Activated CD8-positive, alpha-beta T cell treated with anti-CD3 and anti-CD28 coated beads for 36 hours (primary cell): ENCODE measurements at regions of chr13 and their contacts with region 1.

Region 1: DNA sequence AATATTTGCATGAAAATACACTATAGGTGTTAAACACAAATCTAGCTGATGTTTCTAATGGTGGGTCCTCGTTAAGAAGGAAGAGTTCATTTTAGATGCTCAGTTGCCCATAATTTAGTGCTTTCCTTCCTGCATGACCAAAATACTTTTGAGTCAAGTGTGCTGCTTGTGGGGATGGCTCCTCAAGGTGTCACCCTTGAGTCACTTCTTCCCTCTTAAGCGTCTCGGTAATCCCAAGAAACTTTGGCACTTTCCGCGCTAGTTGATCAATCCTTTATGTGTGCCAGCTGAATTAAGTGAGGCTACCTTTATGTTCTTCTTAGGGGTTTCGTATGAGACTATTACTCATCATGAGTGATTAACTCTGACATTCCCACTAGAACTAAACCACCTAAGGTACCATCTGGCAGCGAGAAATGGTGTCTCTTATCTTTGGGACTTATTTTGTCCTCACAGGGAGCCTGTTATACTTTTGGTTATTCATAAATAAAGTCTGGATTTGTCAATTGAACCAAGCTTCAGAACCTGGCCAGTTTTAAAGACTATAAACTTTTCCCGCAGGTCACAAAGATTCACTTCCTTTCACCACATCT is 106.8 kb downstream of the NHLRC3 start:
- DNase-seq: peak; percentile 50
- ATAC-seq: peak; percentile 60
- H3K4me3 Mint-ChIP-seq: no peak overlapping the region
- H3K27ac Mint-ChIP-seq: no peak overlapping the region
- H3K4me1 Mint-ChIP-seq: peaks cover 11% of the 10 kb centered on the region
- H3K27me3 Mint-ChIP-seq: peaks cover 33% of the 10 kb centered on the region
- CTCF ChIP-seq: peak; percentile 52

Region 2: GRCh38 chr13:38967446-38967845 is 177.6 kb before region 1 on chr13:
- CTCF ChIA-PET with region 1: no interaction called
- POLR2A ChIA-PET with region 1: no interaction called
- intact Hi-C with region 1: no loop called
- DNase-seq: no peak
- ATAC-seq: no peak
- H3K4me3 Mint-ChIP-seq: no peak overlapping the region
- H3K27ac Mint-ChIP-seq: no peak overlapping the region
- H3K4me1 Mint-ChIP-seq: no peaks in the 10 kb centered on the region
- H3K27me3 Mint-ChIP-seq: peaks cover 10% of the 10 kb centered on the region
- CTCF ChIP-seq: no peak

Region 3: DNA sequence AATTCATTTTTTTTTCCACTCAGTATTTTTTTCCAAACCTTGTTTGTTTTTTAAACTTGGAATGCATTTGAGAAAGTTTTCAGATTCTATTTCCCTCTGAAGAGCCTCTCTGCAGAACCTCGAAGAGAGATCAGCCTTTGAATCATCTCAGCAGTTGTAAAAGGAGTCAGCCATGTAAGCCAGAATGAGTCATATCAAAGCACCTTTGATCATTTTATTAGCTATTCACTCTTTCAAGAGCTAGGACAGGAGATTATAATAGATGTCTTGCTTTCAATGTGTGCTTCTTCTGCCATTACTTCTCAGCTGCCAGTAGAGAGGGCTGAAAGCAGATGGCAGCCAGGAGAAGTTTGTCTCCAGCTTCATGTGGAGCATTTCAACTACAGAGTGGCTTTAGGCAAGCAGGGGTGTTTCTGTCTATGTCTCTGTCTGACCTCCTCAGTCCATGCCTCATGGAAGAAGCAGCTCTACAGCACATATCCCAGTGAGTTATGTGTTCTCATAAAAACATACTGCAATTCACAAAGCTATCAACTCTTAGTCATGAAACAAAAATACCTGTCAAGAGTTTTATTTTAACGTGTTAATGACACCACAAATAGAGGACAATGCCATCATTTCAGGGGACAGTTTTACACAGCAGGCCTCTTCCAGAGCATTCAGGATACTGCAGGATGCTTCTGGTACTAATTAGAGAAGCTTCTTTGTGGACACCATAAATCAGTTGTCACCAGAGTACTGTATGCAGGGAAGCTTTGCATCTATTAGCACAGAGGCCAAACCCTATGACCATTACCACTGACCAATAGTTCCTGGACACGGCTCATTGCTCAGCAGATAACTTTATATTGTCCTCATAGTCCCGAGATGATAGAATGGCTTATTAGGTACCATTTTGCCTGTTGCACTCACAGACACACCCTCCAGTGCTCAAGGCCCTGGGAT is 12.5 kb before region 1 on chr13:
- CTCF ChIA-PET with region 1: interaction called, 14 read pairs
- POLR2A ChIA-PET with region 1: no interaction called
- intact Hi-C with region 1: no loop called
- DNase-seq: no peak
- ATAC-seq: peak; percentile 58
- H3K4me3 Mint-ChIP-seq: no peak overlapping the region
- H3K27ac Mint-ChIP-seq: no peak overlapping the region
- H3K4me1 Mint-ChIP-seq: peaks cover 2% of the 10 kb centered on the region
- H3K27me3 Mint-ChIP-seq: peaks cover 20% of the 10 kb centered on the region
- CTCF ChIP-seq: no peak

Region 4: GRCh38 chr13:39263033-39263432 is 118.0 kb after region 1 on chr13:
- CTCF ChIA-PET with region 1: interaction called, 6 read pairs
- POLR2A ChIA-PET with region 1: no interaction called
- intact Hi-C with region 1: loop called (anchors 10 kb)
- DNase-seq: peak; percentile 64
- ATAC-seq: peak; percentile 83
- H3K4me3 Mint-ChIP-seq: no peak overlapping the region
- H3K27ac Mint-ChIP-seq: no peak overlapping the region
- H3K4me1 Mint-ChIP-seq: peaks cover 17% of the 10 kb centered on the region
- H3K27me3 Mint-ChIP-seq: peaks cover 8% of the 10 kb centered on the region
- CTCF ChIP-seq: peak; percentile 57

Region 5: DNA sequence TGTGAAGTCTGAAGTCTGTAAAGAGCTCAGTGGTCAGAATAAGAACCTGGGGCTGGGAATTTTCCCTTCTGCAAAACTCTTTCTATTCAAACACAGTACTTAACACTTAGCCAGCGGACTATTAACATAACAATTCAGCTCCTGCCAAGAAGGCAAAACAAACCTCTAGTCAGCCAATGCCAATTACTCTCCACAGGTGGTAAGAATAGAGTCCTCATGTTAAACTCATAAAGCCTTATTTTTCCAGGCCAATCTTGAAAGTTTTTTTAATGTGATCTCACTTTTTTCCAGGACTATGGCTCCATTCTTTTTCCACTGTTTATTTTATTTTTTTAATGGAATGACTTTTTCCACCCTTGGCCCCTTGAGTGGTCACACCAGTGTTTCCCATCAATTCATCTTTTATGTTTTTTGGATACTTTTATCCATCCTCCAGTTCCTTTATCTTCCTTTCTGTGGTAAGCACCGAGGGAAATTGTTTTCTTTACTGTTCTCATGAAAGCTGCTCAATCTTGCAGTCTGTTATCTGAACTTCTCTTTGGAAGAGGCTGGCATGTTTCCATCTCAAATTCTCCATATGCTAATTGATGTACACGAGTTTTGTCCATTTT is 240.7 kb after region 1 on chr13:
- CTCF ChIA-PET with region 1: no interaction called
- POLR2A ChIA-PET with region 1: no interaction called
- intact Hi-C with region 1: no loop called
- DNase-seq: no peak
- ATAC-seq: no peak
- H3K4me3 Mint-ChIP-seq: no peak overlapping the region
- H3K27ac Mint-ChIP-seq: no peak overlapping the region
- H3K4me1 Mint-ChIP-seq: no peaks in the 10 kb centered on the region
- H3K27me3 Mint-ChIP-seq: no peaks in the 10 kb centered on the region
- CTCF ChIP-seq: no peak